ENCODE measurements at regions of chr20 and their contacts with region 1.

Region 1: DNA sequence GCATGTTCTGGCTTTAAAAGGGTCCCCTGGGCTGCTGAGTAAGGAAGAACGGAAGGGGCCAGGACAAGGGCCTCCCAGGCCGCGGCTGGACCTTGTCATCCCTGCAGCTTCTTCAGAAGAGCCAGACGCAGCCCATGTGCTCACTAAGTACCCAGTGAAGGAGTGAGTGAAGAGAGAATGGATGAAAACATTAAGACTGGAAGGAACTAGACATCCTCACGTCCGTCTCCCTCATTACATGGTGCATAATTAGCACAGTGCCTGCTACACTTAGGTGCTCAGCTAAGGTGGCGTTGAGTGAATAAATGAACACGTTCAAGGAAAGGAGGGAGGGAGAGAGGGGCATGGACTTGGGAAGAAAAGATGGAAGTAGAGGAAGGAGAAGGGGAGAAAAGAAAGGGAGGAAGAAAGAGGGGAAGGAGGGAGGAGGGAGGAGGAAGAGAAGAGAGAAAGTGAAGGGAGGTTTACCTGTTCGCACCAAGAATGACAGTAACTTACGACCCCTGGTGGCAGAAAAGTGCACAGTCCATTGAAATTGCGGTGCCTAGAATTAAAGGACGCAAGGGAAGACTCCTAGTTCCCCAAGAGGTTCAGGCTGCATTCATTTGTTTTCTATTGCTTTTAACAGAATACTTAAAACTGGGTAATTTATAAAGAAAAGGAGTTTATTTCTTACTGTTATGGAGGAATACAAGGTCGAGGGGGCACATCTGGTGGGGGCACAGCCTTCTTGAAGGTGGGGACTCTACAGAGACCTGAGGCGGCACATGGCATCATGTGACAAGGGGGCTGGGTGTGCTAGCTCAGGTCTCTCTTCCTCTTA is 8.0 kb downstream of the TP53RK start:
- DNase-seq: peak; percentile 39 to 69 (median 53)
- H3K4me3 ChIP-seq: no peak overlapping the region
- H3K4me3 Mint-ChIP-seq: no peak overlapping the region
- H3K27ac ChIP-seq: no peak overlapping the region
- H3K27ac Mint-ChIP-seq: peak overlapping the region in 7 of 8 donors; percentile 22 to 85 (median 53)
- H3K4me1 ChIP-seq: peaks cover 22% of the 10 kb centered on the region
- H3K4me1 Mint-ChIP-seq: peaks cover 33 to 57% (median 34%) of the 10 kb centered on the region in 3 donors
- H3K27me3 ChIP-seq: no peaks in the 10 kb centered on the region
- H3K27me3 Mint-ChIP-seq: peaks cover 0 to 4% of the 10 kb centered on the region in 2 donors

Region 2: DNA sequence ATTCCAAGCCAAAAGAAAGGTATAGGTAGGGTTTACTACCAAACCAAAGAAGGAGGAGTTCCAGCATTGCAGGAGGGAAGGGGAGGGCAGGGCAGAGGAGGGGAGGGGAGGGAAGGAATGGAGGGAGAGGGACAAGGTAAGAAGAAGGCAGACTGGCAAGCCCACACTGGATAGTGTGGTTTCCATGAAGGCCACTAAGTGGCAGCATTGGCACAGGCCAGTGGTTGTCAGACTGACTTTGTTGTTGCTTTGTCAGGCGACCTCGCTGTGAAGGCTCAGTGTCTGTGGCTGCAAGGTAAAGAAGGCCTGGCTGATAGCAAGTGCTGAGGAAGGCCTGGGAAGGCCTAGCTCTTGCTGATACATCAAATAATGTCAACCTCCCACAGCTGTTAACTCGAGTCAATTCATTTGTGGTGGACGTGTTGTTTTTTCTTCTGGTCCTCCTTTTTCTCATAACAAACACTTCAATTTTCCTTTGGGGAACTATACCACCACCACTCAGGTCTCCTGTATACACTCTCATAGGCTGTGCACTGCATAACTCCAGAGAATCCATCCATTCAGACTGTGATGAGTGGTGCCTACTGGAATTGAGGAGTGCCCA is 160.2 kb before region 1 on chr20:
- CTCF ChIA-PET with region 1: interaction called, 10 read pairs
- POLR2A ChIA-PET with region 1: interaction called, 5 read pairs
- DNase-seq: peak; percentile 15 to 64 (median 21)
- H3K4me3 ChIP-seq: no peak overlapping the region
- H3K4me3 Mint-ChIP-seq: no peak overlapping the region
- H3K27ac ChIP-seq: no peak overlapping the region
- H3K27ac Mint-ChIP-seq: no peak overlapping the region
- H3K4me1 ChIP-seq: no peaks in the 10 kb centered on the region
- H3K4me1 Mint-ChIP-seq: no peaks in the 10 kb centered on the region
- H3K27me3 ChIP-seq: peaks cover 4% of the 10 kb centered on the region
- H3K27me3 Mint-ChIP-seq: peaks cover 11 to 14% of the 10 kb centered on the region in 2 donors

Region 3: DNA sequence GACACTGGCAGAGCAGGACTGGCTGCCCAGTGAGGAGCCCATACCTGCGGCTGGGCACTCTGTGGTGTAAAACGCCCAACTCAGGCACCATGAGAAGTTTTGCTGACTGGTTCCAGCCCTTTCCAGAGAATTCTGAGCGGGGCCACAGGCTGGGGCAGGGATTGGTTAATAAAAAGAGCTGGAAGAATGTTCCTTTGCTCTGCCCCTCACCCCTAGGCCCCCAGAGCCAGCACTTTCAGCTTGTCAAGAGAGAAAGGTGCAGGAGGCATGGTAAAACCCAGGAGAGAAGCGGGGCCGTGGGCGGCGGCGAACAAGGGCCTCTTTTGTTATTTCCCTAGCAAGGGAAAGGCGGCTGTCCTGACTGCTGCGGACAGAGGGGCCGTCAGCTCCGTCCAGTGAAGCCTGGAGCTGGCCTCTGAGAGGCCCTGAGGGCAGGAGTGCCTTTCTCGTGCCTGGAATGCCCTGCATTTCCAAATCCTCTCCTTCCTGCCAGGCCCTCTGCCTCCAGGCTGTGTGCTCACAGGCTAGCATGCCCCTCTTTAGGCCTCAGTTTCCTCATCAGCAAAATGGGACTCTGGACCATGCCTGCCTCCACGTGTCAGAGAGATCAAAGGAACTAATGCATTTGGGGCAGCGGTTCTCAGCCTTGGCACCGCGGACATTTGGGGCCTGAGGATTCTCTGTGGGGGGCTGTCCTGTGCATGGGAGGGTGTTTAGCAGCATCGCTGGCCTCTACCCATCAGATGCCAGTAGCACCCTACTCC is 42.9 kb before region 1 on chr20:
- CTCF ChIA-PET with region 1: no interaction called
- POLR2A ChIA-PET with region 1: no interaction called
- DNase-seq: no peak
- H3K4me3 ChIP-seq: no peak overlapping the region
- H3K4me3 Mint-ChIP-seq: no peak overlapping the region
- H3K27ac ChIP-seq: no peak overlapping the region
- H3K27ac Mint-ChIP-seq: no peak overlapping the region
- H3K4me1 ChIP-seq: no peaks in the 10 kb centered on the region
- H3K4me1 Mint-ChIP-seq: no peaks in the 10 kb centered on the region
- H3K27me3 ChIP-seq: no peaks in the 10 kb centered on the region
- H3K27me3 Mint-ChIP-seq: peaks cover 14 to 58% of the 10 kb centered on the region in 2 donors

Region 4: DNA sequence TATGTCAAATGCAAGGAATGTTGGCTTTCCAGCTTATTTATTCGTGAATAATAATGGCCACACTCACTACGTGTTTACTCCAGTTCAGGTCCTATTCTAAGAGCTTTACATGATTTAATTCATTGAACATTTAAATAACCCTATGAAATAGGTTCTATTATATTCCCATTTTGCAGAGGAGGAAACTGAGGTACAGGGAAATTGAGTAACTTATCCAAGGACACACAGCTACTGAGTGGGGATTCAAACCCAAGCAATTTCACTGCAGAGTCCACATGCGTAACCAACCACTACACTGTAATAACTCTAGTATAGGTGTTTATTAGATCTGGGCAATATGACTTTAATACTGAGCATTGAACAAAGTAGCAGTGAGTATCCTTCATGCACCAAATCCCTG is 17.7 kb before region 1 on chr20:
- CTCF ChIA-PET with region 1: no interaction called
- POLR2A ChIA-PET with region 1: no interaction called
- DNase-seq: no peak
- H3K4me3 ChIP-seq: no peak overlapping the region
- H3K4me3 Mint-ChIP-seq: no peak overlapping the region
- H3K27ac ChIP-seq: no peak overlapping the region
- H3K27ac Mint-ChIP-seq: no peak overlapping the region
- H3K4me1 ChIP-seq: no peaks in the 10 kb centered on the region
- H3K4me1 Mint-ChIP-seq: no peaks in the 10 kb centered on the region
- H3K27me3 ChIP-seq: no peaks in the 10 kb centered on the region
- H3K27me3 Mint-ChIP-seq: no peaks in the 10 kb centered on the region

Region 5: DNA sequence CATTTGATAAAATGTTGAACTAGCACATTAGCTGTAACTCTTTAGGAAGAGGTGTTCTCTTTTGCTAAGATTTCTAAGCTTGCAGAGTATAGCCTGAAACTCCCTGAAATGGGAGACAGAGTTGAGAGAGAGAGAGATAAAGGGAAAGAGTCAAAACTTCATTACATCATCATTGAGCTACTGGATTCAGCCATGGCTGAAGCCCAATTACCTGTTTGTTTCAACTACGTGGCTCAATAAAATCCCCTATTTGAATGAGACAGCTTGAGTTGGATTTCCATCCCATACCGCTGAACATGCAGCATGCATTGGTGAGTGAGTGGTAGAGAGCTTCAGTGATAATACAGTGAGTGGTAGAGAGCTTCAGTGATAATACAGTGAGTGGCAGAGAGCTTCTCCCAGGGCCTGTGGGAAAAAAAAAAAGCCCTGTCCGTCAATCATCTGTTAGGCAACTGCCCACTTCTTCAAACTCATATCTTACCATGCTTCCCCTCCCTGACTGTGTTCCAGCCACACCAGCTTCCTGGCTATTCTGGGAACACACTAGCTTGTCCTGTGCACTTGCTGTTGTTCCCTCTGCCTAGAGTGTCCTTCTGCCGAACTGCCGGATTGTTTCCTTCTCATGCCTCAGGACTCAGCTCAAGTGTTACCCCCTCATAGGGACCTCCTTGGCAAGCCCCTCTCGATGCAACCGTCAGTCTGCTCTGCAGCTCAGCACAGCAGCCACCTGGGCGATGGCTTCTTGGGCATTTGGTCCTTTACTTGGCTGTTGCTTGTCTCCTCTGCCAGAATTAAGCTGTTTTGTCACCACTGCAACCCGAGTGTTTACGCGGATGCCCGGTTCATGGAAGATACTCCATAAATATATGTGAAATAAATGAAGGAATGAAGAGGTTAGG is 122.1 kb after region 1 on chr20:
- CTCF ChIA-PET with region 1: no interaction called
- POLR2A ChIA-PET with region 1: no interaction called
- DNase-seq: no peak
- H3K4me3 ChIP-seq: no peak overlapping the region
- H3K4me3 Mint-ChIP-seq: no peak overlapping the region
- H3K27ac ChIP-seq: no peak overlapping the region
- H3K27ac Mint-ChIP-seq: no peak overlapping the region
- H3K4me1 ChIP-seq: no peaks in the 10 kb centered on the region
- H3K4me1 Mint-ChIP-seq: no peaks in the 10 kb centered on the region
- H3K27me3 ChIP-seq: no peaks in the 10 kb centered on the region
- H3K27me3 Mint-ChIP-seq: peaks cover 9 to 32% of the 10 kb centered on the region in 2 donors

Measured in CD8-positive, alpha-beta memory T cell (primary cell).